Right ventricle myocardium inferior (tissue), 1 donor: ENCODE measurements at regions of chr13 and their contacts with region 1.

Region 1: DNA sequence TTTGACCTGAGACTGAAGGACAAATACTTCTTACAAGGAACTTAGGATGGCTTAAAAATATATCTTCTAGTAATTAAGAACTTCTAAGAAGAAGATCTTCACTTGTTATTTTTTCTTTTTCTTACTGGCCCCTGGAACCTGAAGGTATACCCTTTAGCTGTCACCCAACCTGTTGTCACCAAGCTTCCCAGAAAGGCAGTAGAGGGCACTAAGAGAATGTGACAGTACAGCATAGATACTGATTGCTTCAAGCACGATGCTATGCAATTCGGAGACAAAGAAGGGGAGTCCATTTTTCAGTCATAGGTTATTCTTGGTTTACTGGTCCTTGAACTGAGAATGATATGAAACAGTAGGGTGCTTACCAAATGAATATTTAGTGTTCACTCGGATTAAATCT is 208.3 kb upstream of the PCDH9 start:
- DNase-seq: no peak
- ATAC-seq: peak; percentile 56

Region 2: DNA sequence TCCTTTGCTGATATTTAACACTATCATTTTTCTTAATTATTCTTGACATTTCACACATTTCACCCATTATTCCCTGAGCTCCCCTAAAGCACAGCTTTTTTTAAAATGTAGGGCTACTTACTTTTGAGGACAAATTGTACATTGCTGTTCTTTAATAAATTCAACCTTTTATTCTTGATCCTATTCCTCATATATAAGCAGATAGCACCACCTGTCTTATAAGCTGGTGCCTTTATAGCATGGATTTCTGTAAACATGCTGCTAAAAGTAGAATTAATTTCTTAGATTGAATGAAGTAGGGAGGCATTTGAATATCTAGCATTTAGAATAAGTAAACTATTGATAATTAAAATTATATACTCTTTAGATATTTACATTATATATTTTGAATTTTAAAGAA is 395.1 kb after region 1 on chr13:
- intact Hi-C with region 1: loop called (anchors 5 kb)
- DNase-seq: no peak
- ATAC-seq: no peak